ENCODE measurements at regions of chr3 and their contacts with region 1.

Region 1: DNA sequence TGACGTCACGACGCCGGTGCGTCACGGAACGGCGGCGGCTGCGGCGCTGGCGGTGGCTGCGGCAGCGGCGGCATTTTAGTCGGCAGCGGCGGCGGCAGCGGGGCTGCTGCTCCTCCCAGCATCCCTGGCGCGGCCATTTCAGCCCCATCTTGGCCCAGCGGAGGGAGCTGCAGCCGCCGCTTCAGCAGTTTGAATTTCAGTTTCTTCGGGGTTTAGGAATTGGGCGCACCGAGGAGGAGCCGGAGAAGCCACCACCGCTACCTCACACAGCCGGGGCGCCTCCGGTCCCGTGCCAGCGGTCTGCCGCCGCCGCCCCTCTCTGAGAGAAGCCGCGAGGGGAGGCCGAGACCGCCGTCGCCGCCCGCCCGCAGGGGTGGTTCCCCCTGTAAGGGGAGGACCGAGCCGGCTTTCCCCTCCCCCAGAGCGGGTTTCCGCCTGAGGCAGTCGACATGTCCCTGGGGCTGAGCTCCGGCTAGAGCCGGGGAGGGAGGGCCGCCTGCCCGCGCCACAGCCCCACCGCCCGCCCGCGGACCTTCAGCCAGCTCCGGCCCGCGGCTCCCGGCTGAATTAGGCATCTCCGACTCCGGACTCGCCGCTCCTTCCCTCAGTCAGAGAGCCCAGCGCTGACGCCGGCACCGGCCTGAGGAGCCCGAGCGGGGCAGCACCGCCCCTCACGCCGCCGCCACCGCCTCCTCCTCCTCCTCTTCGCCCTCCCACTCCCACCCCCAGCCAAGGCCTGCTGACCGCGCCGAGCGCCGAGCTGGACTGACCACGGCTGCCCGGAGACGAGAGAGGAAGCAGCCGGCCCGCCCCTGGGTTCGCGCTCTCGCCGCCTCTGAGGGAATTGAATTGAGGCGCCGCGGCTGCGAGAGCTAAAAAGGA is at the start of gene TSC22D2:
- DNase-seq: peak; percentile 93
- H3K4me3 ChIP-seq: peak within 1 kb of the TSS; percentile 78
- H3K27ac ChIP-seq: peak within 1 kb of the TSS; percentile 95
- H3K4me1 ChIP-seq: peaks cover 11% of the 10 kb centered on the region
- CTCF ChIP-seq: no peak
- total RNA-seq, gene TSC22D2: 5.9 and 6.2 TPM in 2 replicates

Region 2: GRCh38 chr3:149086232-149086988 is 1322.1 kb before region 1 on chr3 and contains the start of gene HLTF:
- CTCF ChIA-PET with region 1: no interaction called
- POLR2A ChIA-PET with region 1: interaction called, 3 read pairs
- intact Hi-C with region 1: loop called (anchors 5 kb)
- DNase-seq: peak; percentile 98
- H3K4me3 ChIP-seq: peak within 1 kb of the TSS; percentile 95
- H3K27ac ChIP-seq: peak within 1 kb of the TSS; percentile 72
- H3K4me1 ChIP-seq: peaks cover 71% of the 10 kb centered on the region
- CTCF ChIP-seq: no peak
- total RNA-seq, gene HLTF: 97.5 and 106 TPM in 2 replicates

Region 3: GRCh38 chr3:149969940-149970715 is 438.3 kb before region 1 on chr3:
- CTCF ChIA-PET with region 1: no interaction called
- POLR2A ChIA-PET with region 1: interaction called, 3 read pairs
- intact Hi-C with region 1: loop called (anchors 10 kb)
- DNase-seq: peak; percentile 55
- H3K4me3 ChIP-seq: peak overlapping the region; percentile 71
- H3K27ac ChIP-seq: no peak overlapping the region
- H3K4me1 ChIP-seq: peaks cover 8% of the 10 kb centered on the region
- CTCF ChIP-seq: no peak

Region 4: DNA sequence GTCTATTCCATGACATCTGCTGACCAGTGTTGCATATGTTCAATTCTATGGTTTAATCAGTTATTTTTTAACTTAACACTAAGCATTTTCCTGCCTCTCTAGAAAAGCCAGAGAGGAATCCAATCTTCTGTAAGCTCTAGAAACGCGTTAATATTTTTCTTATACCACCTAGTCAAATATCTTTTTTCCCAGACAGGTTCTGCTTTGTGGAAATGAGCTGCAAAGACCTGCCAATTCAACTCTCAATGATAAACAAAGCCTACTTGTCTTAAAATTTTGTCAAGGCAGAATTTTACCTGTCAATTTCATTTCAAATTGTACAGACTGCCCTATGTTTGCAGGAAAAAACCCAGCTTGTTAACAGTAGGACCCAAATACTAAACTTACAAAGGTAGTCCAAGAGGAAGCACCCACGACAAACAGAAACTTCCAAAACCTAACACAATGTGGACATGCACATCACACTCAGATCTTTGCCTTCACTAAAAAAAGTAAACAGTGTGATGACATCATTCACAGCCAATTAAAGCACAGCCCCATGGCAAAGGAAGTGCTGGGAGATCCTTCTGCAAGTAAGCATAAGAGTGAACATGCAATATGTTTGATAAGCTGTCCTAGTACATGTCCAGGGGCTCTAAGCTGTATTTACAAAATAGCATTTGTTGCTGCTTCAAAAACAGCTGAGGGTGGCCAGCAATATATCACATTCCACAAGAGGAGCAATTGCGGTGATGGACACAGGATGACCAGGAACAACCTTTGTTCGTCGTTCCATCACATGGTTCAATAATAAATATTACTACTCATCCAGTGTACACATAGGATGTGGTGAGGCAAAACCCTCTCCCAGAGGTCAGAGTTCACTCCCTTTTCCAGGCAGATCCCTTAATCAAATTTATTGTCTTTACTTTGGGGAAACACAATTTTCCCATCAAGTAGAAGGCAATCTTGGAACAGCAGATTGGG is 139.8 kb before region 1 on chr3:
- CTCF ChIA-PET with region 1: no interaction called
- POLR2A ChIA-PET with region 1: no interaction called
- intact Hi-C with region 1: no loop called
- DNase-seq: no peak
- H3K4me3 ChIP-seq: no peak overlapping the region
- H3K27ac ChIP-seq: no peak overlapping the region
- H3K4me1 ChIP-seq: peaks cover 4% of the 10 kb centered on the region
- CTCF ChIP-seq: no peak

Region 5: DNA sequence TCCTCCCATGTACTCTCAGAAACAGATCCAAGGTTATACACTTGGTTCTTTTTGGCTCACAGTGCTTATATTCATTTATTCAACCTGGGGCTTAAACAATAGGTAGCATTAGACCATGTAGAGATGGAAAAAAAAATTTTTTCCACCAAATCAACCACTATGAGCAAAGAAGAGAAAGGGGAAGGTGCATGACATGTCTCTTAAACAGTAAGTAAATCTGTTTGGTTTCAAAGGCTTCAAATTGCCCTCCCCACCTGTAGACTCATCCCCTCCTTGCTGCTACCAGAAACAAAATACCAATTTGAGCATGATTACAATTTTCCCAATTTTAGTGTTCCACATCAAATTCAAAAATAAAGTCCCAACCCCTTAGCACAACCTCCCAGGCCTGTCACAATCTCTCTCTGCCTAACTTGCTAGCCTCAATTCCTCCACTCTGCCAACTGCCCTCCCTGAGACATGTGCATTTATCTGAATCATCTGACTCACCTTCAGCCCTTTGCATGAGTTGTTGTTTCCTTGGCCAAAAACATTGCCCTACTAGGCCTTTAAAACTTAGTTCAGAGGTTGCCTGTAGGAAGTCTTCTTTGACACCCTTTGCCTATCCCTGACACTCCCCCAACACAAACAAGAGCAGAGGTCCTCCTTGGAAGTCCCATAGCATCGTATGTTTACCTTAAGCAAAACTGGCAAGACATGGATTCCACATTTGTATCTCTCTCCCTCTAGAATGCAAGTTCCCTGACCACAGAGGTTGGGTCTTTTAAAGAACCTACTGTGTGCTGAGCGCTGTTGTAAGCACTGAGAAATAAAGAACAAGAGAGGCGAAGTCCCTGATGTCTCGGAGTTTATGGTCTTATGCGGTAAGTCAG is 30.6 kb before region 1 on chr3:
- CTCF ChIA-PET with region 1: no interaction called
- POLR2A ChIA-PET with region 1: no interaction called
- intact Hi-C with region 1: no loop called
- DNase-seq: no peak
- H3K4me3 ChIP-seq: no peak overlapping the region
- H3K27ac ChIP-seq: no peak overlapping the region
- H3K4me1 ChIP-seq: peaks cover 4% of the 10 kb centered on the region
- CTCF ChIP-seq: no peak

Region 6: GRCh38 chr3:150434234-150434633 is 25.8 kb after region 1 on chr3:
- CTCF ChIA-PET with region 1: interaction called, 3 read pairs
- POLR2A ChIA-PET with region 1: interaction called, 16 read pairs
- intact Hi-C with region 1: no loop called
- DNase-seq: no peak
- H3K4me3 ChIP-seq: no peak overlapping the region
- H3K27ac ChIP-seq: no peak overlapping the region
- H3K4me1 ChIP-seq: no peaks in the 10 kb centered on the region
- CTCF ChIP-seq: no peak

Region 7: DNA sequence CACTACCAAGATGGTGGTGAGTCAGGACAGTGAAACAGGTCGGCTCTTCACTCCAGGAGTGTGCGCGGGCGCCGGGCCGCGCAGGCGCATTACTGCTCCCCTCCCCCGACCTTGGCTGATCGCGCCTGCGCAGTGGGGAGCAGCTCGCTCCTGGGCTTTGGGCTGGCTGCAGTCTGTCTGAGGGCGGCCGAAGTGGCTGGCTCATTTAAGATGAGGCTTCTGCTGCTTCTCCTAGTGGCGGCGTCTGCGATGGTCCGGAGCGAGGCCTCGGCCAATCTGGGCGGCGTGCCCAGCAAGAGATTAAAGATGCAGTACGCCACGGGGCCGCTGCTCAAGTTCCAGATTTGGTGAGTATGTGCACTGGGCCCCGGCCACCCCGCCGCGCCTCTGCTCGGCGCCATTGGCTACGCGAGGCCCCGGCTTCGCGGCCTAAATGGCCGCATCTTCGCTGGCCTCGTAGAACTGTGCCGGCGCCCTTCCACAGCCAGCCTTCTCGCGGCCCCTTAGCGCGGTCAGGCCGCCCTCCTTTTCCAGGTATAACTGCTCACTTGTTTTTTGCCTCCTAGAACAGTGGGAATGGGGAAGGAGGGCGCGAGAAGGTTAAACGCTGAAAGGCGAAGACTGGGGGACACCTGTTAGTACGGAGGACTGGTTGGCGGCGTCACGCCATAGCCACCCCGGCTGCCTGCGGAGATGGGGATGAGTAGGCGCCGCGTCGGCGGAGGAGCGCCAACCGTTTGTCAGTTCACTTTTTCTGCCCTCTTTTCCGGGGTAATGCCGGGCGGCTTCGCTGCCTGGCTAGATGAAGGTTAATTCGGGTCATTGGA is 194.9 kb after region 1 on chr3 and contains the start of gene SELENOT:
- CTCF ChIA-PET with region 1: no interaction called
- POLR2A ChIA-PET with region 1: interaction called, 5 read pairs
- intact Hi-C with region 1: loop called (anchors 1 kb)
- DNase-seq: peak; percentile 95
- H3K4me3 ChIP-seq: peak within 1 kb of the TSS; percentile 88
- H3K27ac ChIP-seq: peak within 1 kb of the TSS; percentile 93
- H3K4me1 ChIP-seq: peaks cover 54% of the 10 kb centered on the region
- CTCF ChIP-seq: 0 out of 2 replicates have a peak, but pooled peaks have one; percentile 29
- total RNA-seq, gene SELENOT: 36.8 and 60.7 TPM in 2 replicates

Measured in OCI-LY7 (cell line).